IMR-90 (cell line): ENCODE measurements at regions of chr17 and their contacts with region 1.

Region 1: GRCh38 chr17:10646392-10646990 is 10.6 kb downstream of the MYH3 start:
- DNase-seq: peak; percentile 70
- ATAC-seq: peak; percentile 93
- H3K4me3 ChIP-seq: no peak overlapping the region
- H3K27ac ChIP-seq: no peak overlapping the region
- H3K4me1 ChIP-seq: no peaks in the 10 kb centered on the region; the same call in 1 of the 2 replicates
- H3K27me3 ChIP-seq: no peaks in the 10 kb centered on the region
- CTCF ChIP-seq: peak; percentile 90
- POLR2A ChIP-seq: 0 out of 2 replicates have a peak, but pooled peaks have one; percentile 25
- RAD21 ChIP-seq: peak; percentile 87

Region 2: DNA sequence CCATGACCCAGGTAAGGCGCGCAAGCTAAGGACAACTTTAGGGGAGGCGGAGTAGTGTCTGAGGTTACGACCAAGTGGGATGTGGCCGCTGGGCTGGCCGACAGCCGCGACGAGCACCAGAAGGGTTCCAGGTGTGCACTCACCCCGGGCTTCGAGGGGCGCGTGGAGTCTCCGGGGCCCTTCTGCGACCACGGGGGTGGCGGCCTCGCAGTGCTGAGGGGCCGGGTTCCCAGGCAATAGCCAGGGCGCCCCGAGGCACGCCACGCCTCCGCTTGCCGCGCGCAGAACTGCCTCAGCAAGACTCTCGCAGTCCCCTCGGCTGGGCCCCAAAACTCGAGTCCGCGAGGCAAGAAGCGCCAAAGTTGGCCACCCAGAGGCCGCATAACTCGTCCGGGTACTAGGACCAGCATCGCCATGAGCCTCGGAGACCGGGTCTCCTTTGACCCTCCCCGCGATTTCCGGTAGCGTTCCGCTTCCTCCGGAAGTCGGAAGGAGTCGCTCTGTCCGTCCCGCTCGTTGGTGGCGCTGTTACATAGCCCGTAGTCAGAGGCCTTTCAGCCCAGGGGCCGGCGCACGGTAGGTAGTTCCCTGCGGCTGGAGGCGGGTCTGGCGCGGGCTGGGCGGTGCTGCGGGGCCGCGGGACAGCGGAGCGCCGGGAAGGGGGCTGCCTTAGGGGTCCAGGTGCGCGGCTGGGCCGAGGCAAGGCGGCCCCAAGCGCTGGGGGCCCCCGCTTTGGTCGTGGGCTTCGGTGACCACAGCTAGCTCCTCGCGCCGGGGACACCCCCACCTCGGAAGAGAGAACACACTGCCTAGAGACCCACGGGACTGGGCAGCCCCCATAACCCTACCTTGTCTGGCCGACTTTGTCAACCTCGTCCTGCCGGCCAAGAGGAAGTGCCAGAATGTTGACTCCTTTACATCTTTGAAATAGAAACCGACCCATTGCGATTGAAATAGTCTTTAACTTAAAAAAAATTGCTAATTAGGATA is 50.9 kb after region 1 on chr17 and contains the starts of genes ADPRM and SCO1:
- CTCF ChIA-PET with region 1: no interaction called
- POLR2A ChIA-PET with region 1: no interaction called
- dilution Hi-C with region 1: no loop called
- in situ Hi-C with region 1: no loop called
- intact Hi-C with region 1: loop called (anchors 5 kb)
- DNase-seq: peak; percentile 93
- ATAC-seq: peak; percentile 98
- H3K4me3 ChIP-seq: peak within 1 kb of the TSS; percentile 77
- H3K27ac ChIP-seq: peak within 1 kb of the TSS; percentile 76
- H3K4me1 ChIP-seq: peaks cover under 1% of the 10 kb centered on the region
- H3K27me3 ChIP-seq: no peaks in the 10 kb centered on the region
- CTCF ChIP-seq: peak; percentile 49
- POLR2A ChIP-seq: peak; percentile 87
- RAD21 ChIP-seq: no peak
- total RNA-seq, gene ADPRM: 10.3 and 12.2 TPM in 2 replicates
- total RNA-seq, gene SCO1: 21.7 and 23.1 TPM in 2 replicates

Region 3: DNA sequence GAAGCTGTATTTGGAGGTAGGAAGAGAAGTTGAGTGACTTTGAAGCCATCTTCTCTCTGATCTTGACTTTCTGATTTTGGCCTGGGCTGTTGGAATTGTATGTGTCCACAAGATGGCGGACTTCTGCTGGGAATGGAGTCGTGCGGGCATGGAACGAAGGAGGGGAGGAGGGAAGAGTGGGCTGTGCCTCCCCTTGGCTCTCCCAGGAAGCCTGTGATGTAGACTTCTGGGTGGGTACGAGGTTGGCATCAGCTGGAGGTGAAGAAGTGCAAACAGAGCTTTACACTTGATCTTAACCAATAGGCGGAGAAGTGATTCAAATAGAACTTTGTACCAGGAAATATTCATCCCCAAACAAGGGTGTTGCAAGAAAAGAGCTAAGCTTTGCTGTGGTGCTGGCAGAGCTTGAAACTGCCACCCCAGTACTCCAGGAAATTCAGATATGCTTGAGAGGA is 90.7 kb after region 1 on chr17:
- CTCF ChIA-PET with region 1: no interaction called
- POLR2A ChIA-PET with region 1: no interaction called
- dilution Hi-C with region 1: no loop called
- in situ Hi-C with region 1: loop called (anchors 10 kb)
- intact Hi-C with region 1: loop called (anchors 2 kb)
- DNase-seq: peak; percentile 55
- ATAC-seq: peak; percentile 98
- H3K4me3 ChIP-seq: no peak overlapping the region
- H3K27ac ChIP-seq: no peak overlapping the region
- H3K4me1 ChIP-seq: no peaks in the 10 kb centered on the region
- H3K27me3 ChIP-seq: peaks cover 10% of the 10 kb centered on the region
- CTCF ChIP-seq: peak; percentile 80
- POLR2A ChIP-seq: no peak
- RAD21 ChIP-seq: peak; percentile 77

Region 4: GRCh38 chr17:11935734-11936406 is 1289.4 kb after region 1 on chr17:
- CTCF ChIA-PET with region 1: interaction called, 3 read pairs
- POLR2A ChIA-PET with region 1: no interaction called
- dilution Hi-C with region 1: no loop called
- in situ Hi-C with region 1: no loop called
- intact Hi-C with region 1: loop called (anchors 5 kb)
- DNase-seq: peak; percentile 33
- ATAC-seq: no peak
- H3K4me3 ChIP-seq: no peak overlapping the region
- H3K27ac ChIP-seq: no peak overlapping the region
- H3K4me1 ChIP-seq: no peaks in the 10 kb centered on the region
- H3K27me3 ChIP-seq: no peaks in the 10 kb centered on the region
- CTCF ChIP-seq: peak; percentile 61
- POLR2A ChIP-seq: no peak
- RAD21 ChIP-seq: peak; percentile 51